Naive thymus-derived CD4-positive, alpha-beta T cell (primary cell): ENCODE measurements at regions of chr1 and their contacts with region 1.

Region 1: GRCh38 chr1:222713091-222713961 is 962 bp downstream of the BROX start:
- DNase-seq: peak; percentile 76 to 95 (median 93)
- ATAC-seq: peak; percentile 80
- H3K4me3 ChIP-seq: peak overlapping the region; percentile 99
- H3K4me3 Mint-ChIP-seq: peak overlapping the region; percentile 92 to 100 (median 99)
- H3K27ac ChIP-seq: peak overlapping the region; percentile 100
- H3K27ac Mint-ChIP-seq: peak overlapping the region; percentile 97 to 100 (median 99)
- H3K4me1 ChIP-seq: peaks cover 11 to 21% of the 10 kb centered on the region in 2 donors
- H3K4me1 Mint-ChIP-seq: peaks cover 37 to 69% (median 60%) of the 10 kb centered on the region in 7 donors
- H3K27me3 ChIP-seq: no peaks in the 10 kb centered on the region
- H3K27me3 Mint-ChIP-seq: peaks cover 0 to 2% (median 0%) of the 10 kb centered on the region in 5 donors

Region 2: GRCh38 chr1:221708987-221709386 is 1004.3 kb before region 1 on chr1:
- CTCF ChIA-PET with region 1: no interaction called
- POLR2A ChIA-PET with region 1: interaction called, 4 read pairs
- intact Hi-C with region 1: loop called in 1 of 2 experiments (anchors 2 kb)
- DNase-seq: peak in 6 of 9 donors; percentile 27 to 86 (median 53)
- ATAC-seq: peak; percentile 63
- H3K4me3 ChIP-seq: no peak overlapping the region
- H3K4me3 Mint-ChIP-seq: peak overlapping the region in 3 of 10 donors; percentile 6 to 20 (median 15)
- H3K27ac ChIP-seq: no peak overlapping the region
- H3K27ac Mint-ChIP-seq: peak overlapping the region; percentile 14 to 81 (median 68)
- H3K4me1 ChIP-seq: peaks cover 20 to 58% of the 10 kb centered on the region in 2 donors
- H3K4me1 Mint-ChIP-seq: peaks cover 30 to 72% (median 57%) of the 10 kb centered on the region in 7 donors
- H3K27me3 ChIP-seq: no peaks in the 10 kb centered on the region
- H3K27me3 Mint-ChIP-seq: no peaks in the 10 kb centered on the region

Region 3: DNA sequence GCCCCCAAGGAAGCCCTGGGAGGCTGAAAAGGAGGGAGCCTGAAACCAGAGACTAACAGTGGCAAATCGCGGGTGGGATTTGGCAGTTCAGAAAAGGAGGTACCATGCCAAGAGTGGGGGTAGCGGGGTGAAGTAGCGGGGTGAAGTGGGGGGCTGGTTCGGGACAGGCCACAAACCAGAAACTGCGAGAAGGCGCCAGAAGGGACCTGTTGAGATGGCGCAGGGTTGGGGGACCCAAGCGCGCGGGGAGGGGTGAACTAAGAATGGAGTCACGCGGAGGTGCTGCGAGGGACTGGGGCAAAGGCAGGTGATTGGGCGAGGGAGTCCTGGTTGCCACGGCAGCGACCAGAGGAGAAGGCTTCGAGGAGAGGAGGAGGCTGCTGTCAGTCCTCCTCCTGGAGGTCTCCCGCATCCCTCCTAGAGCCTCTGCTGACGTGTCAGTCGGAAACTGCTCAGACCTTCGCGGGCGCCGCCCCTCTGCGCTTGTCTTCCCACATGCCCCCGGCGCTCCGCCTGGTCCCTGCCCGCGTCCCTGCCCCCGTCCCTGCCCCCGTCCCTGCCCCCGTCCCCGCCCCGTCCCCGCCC is 95.9 kb before region 1 on chr1:
- CTCF ChIA-PET with region 1: interaction called, 3 read pairs
- POLR2A ChIA-PET with region 1: interaction called, 6 read pairs
- intact Hi-C with region 1: loop called (anchors 1 kb)
- DNase-seq: peak; percentile 81 to 98 (median 89)
- ATAC-seq: peak; percentile 93
- H3K4me3 ChIP-seq: peak overlapping the region; percentile 74
- H3K4me3 Mint-ChIP-seq: peak overlapping the region; percentile 89 to 95 (median 93)
- H3K27ac ChIP-seq: peak overlapping the region; percentile 74
- H3K27ac Mint-ChIP-seq: peak overlapping the region; percentile 90 to 97 (median 95)
- H3K4me1 ChIP-seq: peaks cover 18 to 22% of the 10 kb centered on the region in 2 donors
- H3K4me1 Mint-ChIP-seq: peaks cover 14 to 39% (median 32%) of the 10 kb centered on the region in 7 donors
- H3K27me3 ChIP-seq: no peaks in the 10 kb centered on the region
- H3K27me3 Mint-ChIP-seq: peaks cover 5 to 51% (median 26%) of the 10 kb centered on the region in 5 donors

Region 4: DNA sequence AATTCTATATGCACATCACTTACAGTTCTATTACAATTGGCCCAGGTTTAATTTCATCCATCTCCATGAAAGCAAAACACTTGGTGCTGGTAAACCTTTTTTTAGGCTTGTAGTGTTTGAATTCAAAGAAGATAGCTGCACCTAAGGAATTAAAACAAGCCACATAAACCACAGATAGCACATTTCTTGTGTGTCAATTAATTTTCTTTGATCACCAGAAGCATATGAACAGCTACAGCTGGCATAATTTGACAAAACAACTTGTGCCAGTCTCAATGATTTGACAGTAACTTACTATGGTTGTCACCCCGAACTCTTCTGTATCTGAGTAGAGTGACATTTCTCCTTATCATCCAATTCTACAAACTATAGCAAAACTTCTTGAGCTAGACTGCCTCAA is 43.2 kb before region 1 on chr1:
- CTCF ChIA-PET with region 1: no interaction called
- POLR2A ChIA-PET with region 1: interaction called, 4 read pairs
- intact Hi-C with region 1: loop called in 1 of 2 experiments (anchors 2 kb)
- DNase-seq: peak in 4 of 9 donors; percentile 22 to 48 (median 32)
- ATAC-seq: peak; percentile 31
- H3K4me3 ChIP-seq: no peak overlapping the region
- H3K4me3 Mint-ChIP-seq: peak overlapping the region in 7 of 10 donors; percentile 6 to 68 (median 49)
- H3K27ac ChIP-seq: peak overlapping the region; percentile 28
- H3K27ac Mint-ChIP-seq: peak overlapping the region; percentile 65 to 91 (median 89)
- H3K4me1 ChIP-seq: peaks cover 0 to 10% of the 10 kb centered on the region in 2 donors
- H3K4me1 Mint-ChIP-seq: peaks cover 15 to 32% (median 26%) of the 10 kb centered on the region in 7 donors
- H3K27me3 ChIP-seq: no peaks in the 10 kb centered on the region
- H3K27me3 Mint-ChIP-seq: no peaks in the 10 kb centered on the region

Region 5: GRCh38 chr1:222792744-222793143 is 79.4 kb after region 1 on chr1:
- CTCF ChIA-PET with region 1: no interaction called
- POLR2A ChIA-PET with region 1: no interaction called
- intact Hi-C with region 1: no loop called
- DNase-seq: peak in 6 of 9 donors; percentile 7 to 44 (median 27)
- ATAC-seq: no peak
- H3K4me3 ChIP-seq: no peak overlapping the region
- H3K4me3 Mint-ChIP-seq: no peak overlapping the region
- H3K27ac ChIP-seq: no peak overlapping the region
- H3K27ac Mint-ChIP-seq: no peak overlapping the region
- H3K4me1 ChIP-seq: no peaks in the 10 kb centered on the region
- H3K4me1 Mint-ChIP-seq: peaks cover 0 to 17% (median 0%) of the 10 kb centered on the region in 7 donors
- H3K27me3 ChIP-seq: no peaks in the 10 kb centered on the region
- H3K27me3 Mint-ChIP-seq: peaks cover 0 to 2% (median 0%) of the 10 kb centered on the region in 5 donors

Region 6: GRCh38 chr1:223161321-223161720 is 448.0 kb after region 1 on chr1:
- CTCF ChIA-PET with region 1: no interaction called
- POLR2A ChIA-PET with region 1: no interaction called
- intact Hi-C with region 1: no loop called
- DNase-seq: no peak
- ATAC-seq: no peak
- H3K4me3 ChIP-seq: no peak overlapping the region
- H3K4me3 Mint-ChIP-seq: no peak overlapping the region
- H3K27ac ChIP-seq: no peak overlapping the region
- H3K27ac Mint-ChIP-seq: peak overlapping the region in 5 of 9 donors; percentile 10 to 83 (median 30)
- H3K4me1 ChIP-seq: peaks cover 0 to 7% of the 10 kb centered on the region in 2 donors
- H3K4me1 Mint-ChIP-seq: peaks cover 0 to 17% (median 13%) of the 10 kb centered on the region in 7 donors
- H3K27me3 ChIP-seq: no peaks in the 10 kb centered on the region
- H3K27me3 Mint-ChIP-seq: no peaks in the 10 kb centered on the region

Region 7: GRCh38 chr1:223363856-223364684 is 650.7 kb after region 1 on chr1 and contains the start of gene SUSD4:
- CTCF ChIA-PET with region 1: no interaction called
- POLR2A ChIA-PET with region 1: no interaction called
- intact Hi-C with region 1: loop called in 1 of 2 experiments (anchors 1 kb)
- DNase-seq: peak; percentile 54 to 87 (median 81)
- ATAC-seq: peak; percentile 92
- H3K4me3 ChIP-seq: peak within 1 kb of the TSS; percentile 83
- H3K4me3 Mint-ChIP-seq: peak within 1 kb of the TSS; percentile 83 to 96 (median 94)
- H3K27ac ChIP-seq: peak within 1 kb of the TSS; percentile 44
- H3K27ac Mint-ChIP-seq: peak within 1 kb of the TSS in 8 of 9 donors; percentile 61 to 91 (median 72)
- H3K4me1 ChIP-seq: no peaks in the 10 kb centered on the region
- H3K4me1 Mint-ChIP-seq: peaks cover 7 to 29% (median 27%) of the 10 kb centered on the region in 7 donors
- H3K27me3 ChIP-seq: no peaks in the 10 kb centered on the region
- H3K27me3 Mint-ChIP-seq: peaks cover 0 to 68% (median 0%) of the 10 kb centered on the region in 5 donors
- total RNA-seq, gene SUSD4: 0.10 to 20.3 (median 7.1) TPM

Region 8: GRCh38 chr1:224329842-224330753 is 1616.8 kb after region 1 on chr1 and contains the start of gene NVL:
- CTCF ChIA-PET with region 1: no interaction called
- POLR2A ChIA-PET with region 1: interaction called, 6 read pairs
- intact Hi-C with region 1: loop called in 1 of 2 experiments (anchors 5 kb)
- DNase-seq: peak; percentile 71 to 84 (median 79)
- ATAC-seq: peak; percentile 91
- H3K4me3 ChIP-seq: peak within 1 kb of the TSS; percentile 96
- H3K4me3 Mint-ChIP-seq: peak within 1 kb of the TSS; percentile 91 to 100 (median 97)
- H3K27ac ChIP-seq: peak within 1 kb of the TSS; percentile 90
- H3K27ac Mint-ChIP-seq: peak within 1 kb of the TSS; percentile 97 to 100 (median 99)
- H3K4me1 ChIP-seq: peaks cover 3 to 6% of the 10 kb centered on the region in 2 donors
- H3K4me1 Mint-ChIP-seq: peaks cover 29 to 63% (median 47%) of the 10 kb centered on the region in 7 donors
- H3K27me3 ChIP-seq: no peaks in the 10 kb centered on the region
- H3K27me3 Mint-ChIP-seq: no peaks in the 10 kb centered on the region
- total RNA-seq, gene NVL: 23.9 to 48.6 (median 44.7) TPM